K562 (cell line): ENCODE measurements at regions of chr1 and their contacts with region 1.

Region 1: DNA sequence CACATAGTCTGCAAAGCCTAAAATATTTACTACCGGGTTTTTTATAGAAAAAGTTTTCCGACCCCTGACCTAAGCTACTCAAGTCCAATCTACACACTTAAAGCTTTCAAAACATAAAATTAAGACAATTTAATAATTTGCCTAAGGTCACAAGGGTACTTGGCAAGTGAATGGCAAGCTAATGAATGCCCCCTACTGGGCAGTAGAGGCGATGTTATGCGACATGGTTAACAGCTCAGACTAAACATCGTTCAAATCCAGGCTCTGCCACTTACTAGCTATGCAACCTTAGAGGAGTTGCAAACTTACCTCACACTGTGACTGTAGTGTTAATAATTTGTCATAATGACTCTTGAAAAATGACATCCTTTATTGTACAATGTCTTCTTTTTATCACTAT is 317.2 kb upstream of the NFIA start:
- DNase-seq: peak; percentile 43 to 58 (median 56)
- ATAC-seq: peak; percentile 97
- H3K4me3 ChIP-seq: no peak overlapping the region
- H3K27ac ChIP-seq: no peak overlapping the region
- H3K4me1 ChIP-seq: no peaks in the 10 kb centered on the region
- H3K27me3 ChIP-seq: no peaks in the 10 kb centered on the region
- CTCF ChIP-seq: peak; percentile 55 to 76 (median 68)
- EP300 ChIP-seq: no peak
- POLR2A ChIP-seq: no peak
- RAD21 ChIP-seq: peak; percentile 50 to 84

Region 2: DNA sequence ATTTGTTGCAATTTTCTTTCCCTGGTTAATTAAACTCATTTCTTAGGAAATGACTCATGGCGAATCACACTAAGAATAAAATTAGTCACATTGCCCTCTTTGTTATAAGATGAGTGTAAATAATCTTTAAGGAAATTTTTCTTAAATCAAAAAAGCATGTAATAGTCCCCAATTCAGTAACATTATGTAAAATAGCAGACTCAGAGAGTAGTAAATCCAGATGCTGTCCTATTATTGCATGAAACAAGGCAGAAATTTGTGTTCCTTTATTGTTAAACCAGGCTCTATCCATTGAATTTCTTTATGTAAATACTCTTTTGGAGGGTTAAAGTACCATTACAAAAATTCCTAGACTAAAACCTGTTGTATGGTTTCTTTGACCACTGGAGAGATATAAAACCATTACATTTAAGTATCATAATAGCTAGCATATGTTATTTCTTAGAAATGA is 537.1 kb before region 1 on chr1:
- CTCF ChIA-PET with region 1: no interaction called
- POLR2A ChIA-PET with region 1: no interaction called
- in situ Hi-C with region 1: no loop called
- intact Hi-C with region 1: no loop called
- DNase-seq: no peak
- ATAC-seq: no peak
- H3K4me3 ChIP-seq: no peak overlapping the region
- H3K27ac ChIP-seq: no peak overlapping the region
- H3K4me1 ChIP-seq: no peaks in the 10 kb centered on the region
- H3K27me3 ChIP-seq: no peaks in the 10 kb centered on the region
- CTCF ChIP-seq: no peak
- EP300 ChIP-seq: no peak
- POLR2A ChIP-seq: no peak
- RAD21 ChIP-seq: no peak

Region 3: DNA sequence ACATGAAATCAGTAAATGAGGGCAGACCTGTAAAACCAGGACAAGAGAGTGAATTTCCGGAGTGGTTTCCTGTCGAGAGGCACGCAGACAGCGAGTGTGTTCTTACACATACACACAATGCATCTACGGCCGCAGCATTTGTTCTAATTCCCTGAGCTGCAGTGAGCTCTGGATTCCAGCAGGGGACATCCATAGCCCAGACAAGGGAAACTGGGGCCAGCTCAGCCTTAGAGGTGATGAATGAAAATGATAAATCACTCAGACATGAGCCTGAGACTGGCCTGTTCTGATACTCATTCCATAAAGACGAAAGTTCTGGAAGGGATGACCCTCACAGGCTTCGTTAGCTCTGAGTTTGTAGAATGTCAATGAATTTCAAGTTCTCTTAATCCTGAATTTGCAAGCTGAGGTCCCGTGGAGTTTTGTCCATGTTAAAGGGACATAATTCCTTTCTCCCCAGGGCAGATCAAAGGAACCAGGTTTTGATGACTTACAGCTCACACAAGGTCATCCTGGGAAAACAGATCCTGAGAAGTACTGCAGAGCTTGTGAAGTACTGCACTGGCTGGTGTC is 483.8 kb before region 1 on chr1:
- CTCF ChIA-PET with region 1: no interaction called
- POLR2A ChIA-PET with region 1: no interaction called
- in situ Hi-C with region 1: no loop called
- intact Hi-C with region 1: loop called (anchors 1 kb)
- DNase-seq: peak; percentile 13 to 54 (median 34)
- ATAC-seq: peak; percentile 93
- H3K4me3 ChIP-seq: no peak overlapping the region
- H3K27ac ChIP-seq: no peak overlapping the region
- H3K4me1 ChIP-seq: no peaks in the 10 kb centered on the region
- H3K27me3 ChIP-seq: no peaks in the 10 kb centered on the region
- CTCF ChIP-seq: peak; percentile 61 to 79 (median 77)
- EP300 ChIP-seq: no peak
- POLR2A ChIP-seq: no peak
- RAD21 ChIP-seq: peak; percentile 88 to 90

Region 4: DNA sequence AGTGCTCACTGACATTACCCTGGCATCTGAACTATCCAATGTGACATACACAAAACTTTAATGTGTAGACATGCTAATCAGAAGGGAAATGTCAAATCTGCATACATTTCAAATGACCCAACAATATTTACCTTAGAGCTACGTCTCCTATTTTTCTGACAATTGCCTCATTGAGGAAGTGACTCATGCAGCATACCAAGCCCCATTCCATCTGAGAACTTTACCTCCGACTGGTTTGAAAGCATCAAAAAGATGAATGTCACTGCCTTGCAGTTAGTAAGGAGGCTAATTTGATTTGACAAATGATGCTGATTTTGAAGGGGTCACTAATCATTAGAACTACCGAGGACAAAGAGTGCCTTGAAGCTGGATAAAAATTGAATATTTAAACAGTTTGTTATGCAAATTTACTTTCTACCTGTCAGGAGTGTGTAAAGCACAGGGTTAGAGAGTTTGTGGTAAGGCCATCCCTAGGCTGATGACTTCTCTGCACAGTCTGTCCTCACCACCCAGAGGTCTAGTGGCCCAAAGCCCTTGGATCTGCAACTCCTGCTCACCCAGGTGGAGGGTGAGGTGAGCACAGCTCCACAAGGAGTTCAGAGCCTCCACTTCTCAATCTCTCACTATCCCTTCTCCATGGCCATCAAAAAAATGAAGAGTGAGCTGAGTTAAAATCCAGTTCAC is 191.3 kb before region 1 on chr1:
- CTCF ChIA-PET with region 1: no interaction called
- POLR2A ChIA-PET with region 1: no interaction called
- in situ Hi-C with region 1: no loop called
- intact Hi-C with region 1: loop called (anchors 10 kb)
- DNase-seq: no peak
- ATAC-seq: no peak
- H3K4me3 ChIP-seq: no peak overlapping the region
- H3K27ac ChIP-seq: no peak overlapping the region
- H3K4me1 ChIP-seq: no peaks in the 10 kb centered on the region; a peak in 1 of 5 replicates
- H3K27me3 ChIP-seq: no peaks in the 10 kb centered on the region
- CTCF ChIP-seq: no peak
- EP300 ChIP-seq: no peak
- POLR2A ChIP-seq: no peak
- RAD21 ChIP-seq: no peak